ENCODE measurements at regions of chr2 and their contacts with region 1.

Region 1: GRCh38 chr2:55419679-55420438 is at the start of gene CCDC88A:
- DNase-seq: peak; percentile 95
- H3K4me3 Mint-ChIP-seq: peak within 1 kb of the TSS; percentile 98
- H3K27ac Mint-ChIP-seq: peak within 1 kb of the TSS; percentile 95
- H3K4me1 Mint-ChIP-seq: peaks cover 38% of the 10 kb centered on the region
- H3K27me3 Mint-ChIP-seq: no peaks in the 10 kb centered on the region
- CTCF ChIP-seq: no peak
- total RNA-seq, gene CCDC88A: 52.1 and 60.8 TPM in 2 replicates

Region 2: GRCh38 chr2:55268907-55269644 is 150.8 kb before region 1 on chr2 and contains the start of gene MTIF2:
- CTCF ChIA-PET with region 1: interaction called, 3 read pairs
- POLR2A ChIA-PET with region 1: interaction called, 8 read pairs
- intact Hi-C with region 1: loop called (anchors 5 kb)
- DNase-seq: peak; percentile 95
- H3K4me3 Mint-ChIP-seq: peak within 1 kb of the TSS; percentile 87
- H3K27ac Mint-ChIP-seq: peak within 1 kb of the TSS; percentile 91
- H3K4me1 Mint-ChIP-seq: peaks cover 5% of the 10 kb centered on the region
- H3K27me3 Mint-ChIP-seq: no peaks in the 10 kb centered on the region
- CTCF ChIP-seq: no peak
- total RNA-seq, gene MTIF2: 58.3 and 60.7 TPM in 2 replicates

Region 3: DNA sequence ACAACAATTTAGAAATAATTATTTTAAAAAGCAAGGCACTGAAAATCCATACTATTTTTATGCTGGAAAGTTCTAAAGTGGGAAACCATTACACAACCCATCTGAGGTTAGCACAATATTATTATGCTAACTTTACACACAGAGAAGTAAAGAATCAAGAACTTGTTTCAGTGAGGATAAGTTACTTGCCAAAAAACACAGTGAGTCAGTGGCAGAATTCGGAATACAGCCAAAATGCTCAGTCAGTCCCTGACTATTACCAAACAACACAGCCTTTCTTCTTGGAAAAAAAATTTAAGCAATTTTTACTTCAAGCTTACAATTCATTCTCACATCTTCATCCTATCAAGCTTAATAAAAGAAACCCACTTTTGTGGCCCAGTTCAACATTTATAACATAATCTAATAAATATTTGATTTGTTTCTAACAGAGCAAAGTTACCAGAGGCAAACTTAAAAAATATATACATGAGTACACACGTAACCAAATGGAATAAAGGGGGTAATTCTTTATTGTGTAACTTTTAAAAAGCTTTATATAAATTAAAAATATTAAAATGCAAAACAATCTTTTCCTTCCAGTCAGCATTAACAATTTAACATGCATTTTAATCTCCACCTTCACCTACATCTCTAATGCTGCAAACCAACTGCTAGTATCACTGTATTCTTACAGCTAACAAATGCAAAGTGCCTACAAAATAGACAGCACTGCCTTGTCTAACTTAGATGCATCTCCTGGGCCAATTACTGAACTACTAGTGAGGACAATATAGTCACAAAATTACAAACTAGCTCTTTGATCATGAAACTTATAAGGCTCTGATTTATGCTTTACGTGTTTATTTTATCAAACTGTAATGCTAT is 55.4 kb before region 1 on chr2:
- CTCF ChIA-PET with region 1: interaction called, 3 read pairs
- POLR2A ChIA-PET with region 1: interaction called, 9 read pairs
- intact Hi-C with region 1: loop called (anchors 1 kb)
- DNase-seq: peak; percentile 95
- H3K4me3 Mint-ChIP-seq: no peak overlapping the region
- H3K27ac Mint-ChIP-seq: no peak overlapping the region
- H3K4me1 Mint-ChIP-seq: peaks cover 13% of the 10 kb centered on the region
- H3K27me3 Mint-ChIP-seq: no peaks in the 10 kb centered on the region
- CTCF ChIP-seq: no peak

Region 4: GRCh38 chr2:55431982-55432627 is 12.2 kb after region 1 on chr2:
- CTCF ChIA-PET with region 1: interaction called, 6 read pairs
- POLR2A ChIA-PET with region 1: interaction called, 20 read pairs
- intact Hi-C with region 1: no loop called
- DNase-seq: peak; percentile 51
- H3K4me3 Mint-ChIP-seq: no peak overlapping the region
- H3K27ac Mint-ChIP-seq: no peak overlapping the region
- H3K4me1 Mint-ChIP-seq: no peaks in the 10 kb centered on the region
- H3K27me3 Mint-ChIP-seq: no peaks in the 10 kb centered on the region
- CTCF ChIP-seq: peak; percentile 52

Region 5: DNA sequence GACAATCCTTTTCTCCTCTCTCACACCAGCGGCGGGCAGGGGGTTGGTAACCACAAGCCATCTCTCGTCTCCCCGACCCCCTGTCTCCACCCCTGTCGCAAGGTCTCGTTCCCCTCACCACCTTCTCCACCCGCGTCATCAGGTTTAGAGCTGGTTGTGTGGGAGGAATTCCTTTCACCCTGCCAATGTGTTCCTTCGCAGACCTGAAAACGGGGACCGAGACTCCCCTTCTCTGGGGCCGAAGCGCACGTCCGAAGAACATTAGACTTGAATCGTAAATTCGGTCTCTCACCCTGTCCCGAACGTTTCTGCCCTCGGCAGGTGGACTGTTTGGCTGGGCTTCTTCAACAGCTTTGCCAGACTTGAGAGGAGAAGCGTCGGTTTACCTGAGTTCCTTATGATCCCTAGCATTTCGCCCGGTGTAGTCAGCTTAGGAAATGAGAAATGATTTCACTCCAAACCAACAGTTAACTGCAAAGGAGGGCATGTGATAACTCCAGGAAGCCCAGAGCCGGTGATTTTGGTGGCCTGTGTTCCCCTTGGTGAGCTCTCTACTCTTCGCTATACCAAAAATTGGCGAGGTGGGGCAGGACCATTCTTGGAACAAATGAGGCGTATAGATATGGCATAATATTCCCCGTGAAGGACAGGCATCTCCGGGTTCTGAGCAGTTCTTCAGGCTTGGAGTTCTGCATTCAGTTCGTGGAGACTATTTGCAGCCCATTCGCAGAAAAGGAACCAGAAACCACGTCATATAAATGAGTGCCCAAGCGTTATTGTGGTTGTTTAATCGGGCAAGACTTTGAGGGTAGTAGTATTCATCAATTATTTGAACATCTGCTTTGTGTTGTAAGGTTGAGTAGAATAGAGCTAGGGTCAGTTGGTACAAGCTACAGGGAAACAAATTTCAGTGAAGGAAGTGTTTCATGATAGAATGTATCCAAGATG is 100.4 kb after region 1 on chr2:
- CTCF ChIA-PET with region 1: no interaction called
- POLR2A ChIA-PET with region 1: interaction called, 34 read pairs
- intact Hi-C with region 1: no loop called
- DNase-seq: peak; percentile 47
- H3K4me3 Mint-ChIP-seq: peak overlapping the region; percentile 96
- H3K27ac Mint-ChIP-seq: peak overlapping the region; percentile 97
- H3K4me1 Mint-ChIP-seq: peaks cover 13% of the 10 kb centered on the region
- H3K27me3 Mint-ChIP-seq: no peaks in the 10 kb centered on the region
- CTCF ChIP-seq: no peak

Measured in MCF 10A (cell line).